ENCODE measurements at regions of chr17 and their contacts with region 1.

Region 1: DNA sequence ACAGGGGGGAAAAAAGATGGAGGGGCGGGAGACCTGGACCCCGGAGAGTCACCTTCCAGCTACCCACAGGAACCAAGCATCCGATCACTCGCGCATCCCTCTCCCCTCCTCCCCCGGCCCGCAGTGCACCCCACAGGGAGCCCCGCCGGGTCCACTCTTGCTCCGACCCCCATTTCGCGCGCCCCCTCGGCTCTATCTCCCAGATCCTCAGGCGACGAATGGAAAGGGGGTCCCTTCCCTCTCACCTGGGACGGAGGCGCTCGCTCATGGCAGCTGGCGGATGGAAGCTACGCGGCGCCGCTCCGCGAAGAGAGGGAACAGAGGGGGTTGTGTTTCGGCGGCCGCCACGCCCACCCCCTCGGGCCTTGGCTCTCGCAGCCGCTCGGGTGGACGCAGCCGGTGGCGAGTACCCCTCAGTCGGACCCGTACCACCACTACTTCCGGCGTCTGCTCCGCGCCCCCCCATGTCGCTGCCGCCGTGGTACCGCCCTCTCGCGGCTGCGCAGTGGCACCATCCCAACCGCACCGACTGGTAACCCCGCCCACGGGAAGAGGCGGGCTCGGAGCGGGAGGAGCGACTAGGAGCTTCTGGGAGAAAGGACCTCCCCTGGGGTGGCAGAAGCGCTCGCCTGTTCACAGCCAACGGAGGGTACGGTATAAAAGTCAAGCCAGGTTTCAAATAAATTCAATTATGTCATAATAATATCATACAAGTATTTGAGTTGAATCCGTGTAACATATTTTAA is 29.7 kb downstream of the CPSF4L start:
- DNase-seq: peak; percentile 98
- ATAC-seq: peak; percentile 91
- H3K4me3 Mint-ChIP-seq: peak overlapping the region; percentile 81
- H3K27ac Mint-ChIP-seq: peak overlapping the region; percentile 96
- H3K4me1 Mint-ChIP-seq: peaks cover 58% of the 10 kb centered on the region
- H3K27me3 Mint-ChIP-seq: no peaks in the 10 kb centered on the region

Region 2: DNA sequence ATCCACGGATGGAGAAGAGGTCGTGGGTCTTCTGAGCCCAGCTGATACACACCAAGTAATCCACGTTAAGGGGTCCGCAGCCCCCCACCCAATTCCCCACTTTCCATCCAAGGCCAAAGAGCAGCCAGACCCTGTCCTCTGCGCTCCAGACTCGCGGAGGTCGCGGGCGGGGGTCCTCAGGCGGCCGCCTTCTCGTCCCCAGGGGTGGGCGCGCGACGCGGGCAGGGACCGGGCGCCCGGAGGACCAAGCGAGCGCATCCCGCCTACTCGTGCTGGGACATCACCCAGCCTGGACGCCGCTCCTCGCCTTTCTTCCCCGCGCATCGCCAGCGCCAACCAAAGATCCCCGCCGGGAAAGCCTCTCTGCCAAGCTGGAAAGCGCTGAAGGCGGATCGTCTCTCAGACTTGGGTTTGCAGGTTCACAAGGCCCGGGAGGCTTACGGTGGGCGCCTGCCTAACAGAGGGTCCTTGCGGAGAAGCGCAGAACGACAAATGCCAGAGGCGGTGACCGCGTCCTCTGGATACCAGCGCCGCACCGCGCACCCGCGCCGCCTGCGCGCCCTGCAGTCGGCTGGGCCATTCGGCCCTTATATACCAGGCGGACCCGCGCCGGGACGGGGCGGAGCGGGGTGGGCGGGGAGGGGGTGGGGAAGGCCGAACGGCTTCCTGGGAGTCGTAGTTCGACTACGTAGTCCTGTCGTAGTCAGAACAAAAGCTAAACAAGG is 639.6 kb before region 1 on chr17:
- CTCF ChIA-PET with region 1: no interaction called
- POLR2A ChIA-PET with region 1: no interaction called
- intact Hi-C with region 1: loop called in 1 of 2 experiments (anchors 1 kb)
- DNase-seq: peak; percentile 79
- ATAC-seq: peak; percentile 80
- H3K4me3 Mint-ChIP-seq: peak overlapping the region; percentile 75
- H3K27ac Mint-ChIP-seq: peak overlapping the region; percentile 71
- H3K4me1 Mint-ChIP-seq: peaks cover 27% of the 10 kb centered on the region
- H3K27me3 Mint-ChIP-seq: peaks cover 44% of the 10 kb centered on the region

Region 3: DNA sequence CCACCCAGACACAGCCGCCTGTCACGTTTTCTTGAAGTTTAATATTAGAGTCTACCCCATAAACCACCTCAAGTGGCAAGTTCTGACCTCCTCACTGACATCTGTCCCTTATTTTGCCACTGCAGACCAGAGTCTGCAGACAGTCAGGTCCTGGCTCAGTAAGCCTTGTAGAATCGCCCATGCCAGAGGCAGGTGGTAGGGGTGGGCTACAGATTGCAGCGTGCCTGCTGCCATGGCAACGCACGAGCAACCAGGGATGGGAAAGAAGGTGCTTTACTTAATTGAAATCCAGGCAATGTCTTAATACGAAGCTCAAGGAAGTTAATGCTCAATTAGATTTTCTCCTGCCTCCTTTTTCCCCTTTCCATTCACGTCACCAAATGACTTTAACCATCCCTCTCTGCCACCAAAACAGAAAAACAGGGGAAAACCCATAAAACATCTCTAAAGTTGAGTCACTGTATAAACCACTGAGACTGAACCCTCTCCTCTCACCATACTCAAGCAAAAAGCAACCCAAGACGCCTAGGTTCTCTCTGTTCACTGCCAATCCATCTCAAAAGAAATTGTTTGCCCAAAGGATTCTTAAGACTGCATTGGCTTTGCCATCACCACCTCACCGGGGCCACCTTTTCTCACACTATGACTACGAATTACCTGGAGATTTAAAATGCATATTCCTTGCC is 368.3 kb before region 1 on chr17:
- CTCF ChIA-PET with region 1: no interaction called
- POLR2A ChIA-PET with region 1: no interaction called
- intact Hi-C with region 1: loop called in 1 of 2 experiments (anchors 2 kb)
- DNase-seq: peak; percentile 16
- ATAC-seq: peak; percentile 95
- H3K4me3 Mint-ChIP-seq: no peak overlapping the region
- H3K27ac Mint-ChIP-seq: no peak overlapping the region
- H3K4me1 Mint-ChIP-seq: peaks cover 43% of the 10 kb centered on the region
- H3K27me3 Mint-ChIP-seq: no peaks in the 10 kb centered on the region

Region 4: GRCh38 chr17:73192894-73193701 is 38.9 kb before region 1 on chr17 and contains the start of gene COG1:
- CTCF ChIA-PET with region 1: interaction called, 31 read pairs
- POLR2A ChIA-PET with region 1: interaction called, 7 read pairs
- intact Hi-C with region 1: loop called (anchors 1 kb)
- DNase-seq: peak; percentile 91
- ATAC-seq: peak; percentile 78
- H3K4me3 Mint-ChIP-seq: peak within 1 kb of the TSS; percentile 91
- H3K27ac Mint-ChIP-seq: peak within 1 kb of the TSS; percentile 97
- H3K4me1 Mint-ChIP-seq: peaks cover 18% of the 10 kb centered on the region
- H3K27me3 Mint-ChIP-seq: no peaks in the 10 kb centered on the region
- total RNA-seq, gene COG1: 25.6 to 39.0 TPM

Region 5: GRCh38 chr17:73215447-73215846 is 16.6 kb before region 1 on chr17:
- CTCF ChIA-PET with region 1: interaction called, 21 read pairs
- POLR2A ChIA-PET with region 1: no interaction called
- intact Hi-C with region 1: loop called (anchors 2 kb)
- DNase-seq: no peak
- ATAC-seq: peak; percentile 58
- H3K4me3 Mint-ChIP-seq: no peak overlapping the region
- H3K27ac Mint-ChIP-seq: peak overlapping the region; percentile 2
- H3K4me1 Mint-ChIP-seq: peaks cover 30% of the 10 kb centered on the region
- H3K27me3 Mint-ChIP-seq: no peaks in the 10 kb centered on the region

Region 6: GRCh38 chr17:73510981-73511718 is 279.1 kb after region 1 on chr17:
- CTCF ChIA-PET with region 1: no interaction called
- POLR2A ChIA-PET with region 1: no interaction called
- intact Hi-C with region 1: no loop called
- DNase-seq: no peak
- ATAC-seq: no peak
- H3K4me3 Mint-ChIP-seq: no peak overlapping the region
- H3K27ac Mint-ChIP-seq: no peak overlapping the region
- H3K4me1 Mint-ChIP-seq: no peaks in the 10 kb centered on the region
- H3K27me3 Mint-ChIP-seq: no peaks in the 10 kb centered on the region

Region 7: DNA sequence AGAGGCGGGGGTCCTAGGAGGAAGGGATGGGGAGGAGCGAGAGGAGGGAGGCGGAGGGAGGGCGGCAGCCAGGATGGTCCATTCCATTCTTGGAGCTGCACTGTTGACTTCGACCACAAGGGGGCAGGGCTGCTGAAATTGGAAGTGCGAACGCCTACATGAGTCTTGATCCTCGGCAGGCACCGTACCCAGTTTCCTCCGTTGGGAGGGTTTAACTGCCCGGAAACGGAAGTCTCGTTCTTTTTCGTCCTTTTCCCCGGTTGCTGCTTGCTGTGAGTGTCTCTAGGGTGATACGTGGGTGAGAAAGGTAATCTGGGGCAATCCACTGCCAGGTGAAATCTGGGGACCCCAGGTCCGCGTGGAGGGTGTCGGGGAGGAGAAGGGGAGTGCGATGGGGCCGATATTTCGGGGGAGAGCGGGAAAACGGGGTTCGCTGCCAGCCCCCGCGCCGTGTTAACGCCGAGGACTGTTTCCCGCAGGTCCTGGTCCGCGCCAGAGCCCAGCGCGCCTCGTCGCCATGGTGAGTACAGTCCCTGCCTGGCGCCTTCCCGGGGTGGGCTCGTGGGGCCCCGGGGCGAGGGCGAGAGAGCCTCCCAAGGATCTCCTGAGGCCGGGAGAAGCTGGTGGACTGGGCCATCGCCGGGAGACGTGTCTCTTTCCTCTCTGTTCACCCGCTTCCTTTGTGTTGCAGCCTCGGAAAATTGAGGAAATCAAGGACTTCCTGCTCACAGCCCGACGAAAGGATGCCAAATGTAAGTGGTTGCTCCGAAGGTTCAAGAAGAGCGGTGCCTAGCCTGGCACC is 971.6 kb after region 1 on chr17 and contains the start of gene RPL38:
- CTCF ChIA-PET with region 1: no interaction called
- POLR2A ChIA-PET with region 1: no interaction called
- intact Hi-C with region 1: loop called in 1 of 2 experiments (anchors 5 kb)
- DNase-seq: peak; percentile 98
- ATAC-seq: peak; percentile 83
- H3K4me3 Mint-ChIP-seq: peak within 1 kb of the TSS; percentile 100
- H3K27ac Mint-ChIP-seq: peak within 1 kb of the TSS; percentile 100
- H3K4me1 Mint-ChIP-seq: peaks cover 44% of the 10 kb centered on the region
- H3K27me3 Mint-ChIP-seq: peaks cover 11% of the 10 kb centered on the region
- total RNA-seq, gene RPL38: 1,648 to 1,818 TPM